CD4-positive, alpha-beta memory T cell (primary cell): ENCODE measurements at regions of chr19 and their contacts with region 1.

Region 1: GRCh38 chr19:57819475-57820148 is 4.9 kb upstream of the ZNF552 start:
- DNase-seq: peak; percentile 80 to 91 (median 84)
- H3K4me3 ChIP-seq: peak overlapping the region; percentile 86 to 91
- H3K4me3 Mint-ChIP-seq: peak overlapping the region; percentile 96 to 99 (median 98)
- H3K27ac ChIP-seq: peak overlapping the region; percentile 75
- H3K27ac Mint-ChIP-seq: peak overlapping the region; percentile 93 to 99 (median 99)
- H3K4me1 ChIP-seq: peaks cover 25% of the 10 kb centered on the region
- H3K4me1 Mint-ChIP-seq: peaks cover 45 to 75% (median 55%) of the 10 kb centered on the region in 4 donors
- H3K27me3 ChIP-seq: no peaks in the 10 kb centered on the region
- H3K27me3 Mint-ChIP-seq: no peaks in the 10 kb centered on the region

Region 2: GRCh38 chr19:57512845-57513244 is 306.8 kb before region 1 on chr19:
- CTCF ChIA-PET with region 1: no interaction called
- POLR2A ChIA-PET with region 1: no interaction called
- intact Hi-C with region 1: no loop called
- DNase-seq: no peak
- H3K4me3 ChIP-seq: no peak overlapping the region
- H3K4me3 Mint-ChIP-seq: no peak overlapping the region
- H3K27ac ChIP-seq: no peak overlapping the region
- H3K27ac Mint-ChIP-seq: no peak overlapping the region
- H3K4me1 ChIP-seq: no peaks in the 10 kb centered on the region
- H3K4me1 Mint-ChIP-seq: no peaks in the 10 kb centered on the region
- H3K27me3 ChIP-seq: no peaks in the 10 kb centered on the region
- H3K27me3 Mint-ChIP-seq: no peaks in the 10 kb centered on the region

Region 3: DNA sequence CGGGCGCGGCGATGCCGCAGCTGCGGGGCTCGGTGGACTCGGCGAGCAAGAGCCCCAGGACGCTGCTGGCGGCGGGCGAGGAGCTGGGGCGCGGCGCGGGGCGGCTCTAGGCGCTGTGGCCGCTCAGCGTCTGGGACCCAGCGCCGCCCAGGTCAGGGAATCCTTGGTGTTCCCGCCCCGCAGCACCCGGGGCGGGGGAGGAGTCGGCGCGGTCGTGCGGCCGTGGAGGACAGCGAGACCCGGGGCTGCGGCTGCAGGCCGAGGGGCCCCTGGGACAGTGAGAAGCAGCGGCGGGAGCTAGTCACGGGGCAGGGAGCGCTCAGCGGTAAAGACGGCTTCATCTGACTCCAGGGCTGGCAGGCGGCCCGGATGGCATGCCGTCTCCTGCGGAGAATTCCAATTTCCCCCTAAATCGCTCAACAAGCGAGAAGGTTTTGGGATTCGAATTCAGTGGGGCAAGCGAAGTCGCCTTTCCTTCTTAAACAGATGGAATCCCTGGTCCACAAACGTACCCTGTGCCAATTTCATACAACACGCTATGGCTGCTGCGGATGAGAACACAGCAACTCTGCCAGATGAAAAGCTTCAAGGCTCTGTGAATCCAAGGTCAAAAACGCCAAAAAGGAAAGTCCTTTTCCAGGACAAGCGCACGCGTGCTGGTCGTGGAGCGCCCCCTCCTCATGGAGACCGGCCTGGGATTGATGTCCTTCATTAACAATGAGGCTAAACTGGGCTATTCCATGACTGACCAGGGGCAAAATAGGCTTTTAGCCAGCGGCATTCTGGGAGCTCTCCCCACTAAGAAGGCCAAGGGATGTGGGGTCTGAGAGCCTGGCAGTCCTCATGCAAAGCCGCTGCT is 155.1 kb before region 1 on chr19:
- CTCF ChIA-PET with region 1: no interaction called
- POLR2A ChIA-PET with region 1: no interaction called
- intact Hi-C with region 1: no loop called
- DNase-seq: peak in 3 of 5 donors; percentile 6 to 10 (median 8)
- H3K4me3 ChIP-seq: no peak overlapping the region
- H3K4me3 Mint-ChIP-seq: peak overlapping the region; percentile 47 to 76 (median 69)
- H3K27ac ChIP-seq: no peak overlapping the region
- H3K27ac Mint-ChIP-seq: no peak overlapping the region
- H3K4me1 ChIP-seq: peaks cover 12% of the 10 kb centered on the region
- H3K4me1 Mint-ChIP-seq: peaks cover 0 to 5% (median under 1%) of the 10 kb centered on the region in 4 donors
- H3K27me3 ChIP-seq: peaks cover 3% of the 10 kb centered on the region
- H3K27me3 Mint-ChIP-seq: peaks cover 23 to 25% of the 10 kb centered on the region in 2 donors

Region 4: GRCh38 chr19:57719901-57720519 is 99.6 kb before region 1 on chr19:
- CTCF ChIA-PET with region 1: no interaction called
- POLR2A ChIA-PET with region 1: no interaction called
- intact Hi-C with region 1: loop called (anchors 5 kb)
- DNase-seq: no peak
- H3K4me3 ChIP-seq: no peak overlapping the region
- H3K4me3 Mint-ChIP-seq: no peak overlapping the region
- H3K27ac ChIP-seq: no peak overlapping the region
- H3K27ac Mint-ChIP-seq: no peak overlapping the region
- H3K4me1 ChIP-seq: no peaks in the 10 kb centered on the region
- H3K4me1 Mint-ChIP-seq: peaks cover 1 to 9% (median 5%) of the 10 kb centered on the region in 4 donors
- H3K27me3 ChIP-seq: no peaks in the 10 kb centered on the region
- H3K27me3 Mint-ChIP-seq: no peaks in the 10 kb centered on the region

Region 5: GRCh38 chr19:57769345-57770131 is 50.1 kb before region 1 on chr19 and contains the start of gene ZNF586:
- CTCF ChIA-PET with region 1: no interaction called
- POLR2A ChIA-PET with region 1: interaction called, 9 read pairs
- intact Hi-C with region 1: loop called (anchors 2 kb)
- DNase-seq: peak; percentile 82 to 91 (median 85)
- H3K4me3 ChIP-seq: peak within 1 kb of the TSS; percentile 62 to 75
- H3K4me3 Mint-ChIP-seq: peak within 1 kb of the TSS; percentile 96 to 99 (median 96)
- H3K27ac ChIP-seq: peak within 1 kb of the TSS; percentile 75
- H3K27ac Mint-ChIP-seq: peak within 1 kb of the TSS; percentile 91 to 98 (median 96)
- H3K4me1 ChIP-seq: peaks cover 20% of the 10 kb centered on the region
- H3K4me1 Mint-ChIP-seq: peaks cover 23 to 51% (median 33%) of the 10 kb centered on the region in 4 donors
- H3K27me3 ChIP-seq: no peaks in the 10 kb centered on the region
- H3K27me3 Mint-ChIP-seq: no peaks in the 10 kb centered on the region
- total RNA-seq, gene ZNF586: 46.4 to 51.7 TPM

Region 6: GRCh38 chr19:57850553-57851017 is 31.0 kb after region 1 on chr19:
- CTCF ChIA-PET with region 1: no interaction called
- POLR2A ChIA-PET with region 1: interaction called, 10 read pairs
- intact Hi-C with region 1: no loop called
- DNase-seq: no peak
- H3K4me3 ChIP-seq: peak overlapping the region; percentile 62 to 91
- H3K4me3 Mint-ChIP-seq: peak overlapping the region; percentile 90 to 96 (median 96)
- H3K27ac ChIP-seq: peak overlapping the region; percentile 84
- H3K27ac Mint-ChIP-seq: peak overlapping the region; percentile 94 to 98 (median 97)
- H3K4me1 ChIP-seq: peaks cover 20% of the 10 kb centered on the region
- H3K4me1 Mint-ChIP-seq: peaks cover 19 to 46% (median 30%) of the 10 kb centered on the region in 4 donors
- H3K27me3 ChIP-seq: no peaks in the 10 kb centered on the region
- H3K27me3 Mint-ChIP-seq: no peaks in the 10 kb centered on the region

Region 7: GRCh38 chr19:57964748-57965147 is 145.1 kb after region 1 on chr19:
- CTCF ChIA-PET with region 1: no interaction called
- POLR2A ChIA-PET with region 1: no interaction called
- intact Hi-C with region 1: no loop called
- DNase-seq: no peak
- H3K4me3 ChIP-seq: no peak overlapping the region
- H3K4me3 Mint-ChIP-seq: no peak overlapping the region
- H3K27ac ChIP-seq: no peak overlapping the region
- H3K27ac Mint-ChIP-seq: no peak overlapping the region
- H3K4me1 ChIP-seq: no peaks in the 10 kb centered on the region
- H3K4me1 Mint-ChIP-seq: no peaks in the 10 kb centered on the region
- H3K27me3 ChIP-seq: no peaks in the 10 kb centered on the region
- H3K27me3 Mint-ChIP-seq: no peaks in the 10 kb centered on the region

Region 8: GRCh38 chr19:58317476-58318072 is 498.0 kb after region 1 on chr19:
- CTCF ChIA-PET with region 1: no interaction called
- POLR2A ChIA-PET with region 1: no interaction called
- intact Hi-C with region 1: no loop called
- DNase-seq: peak in 1 of 5 donors; percentile 15
- H3K4me3 ChIP-seq: no peak overlapping the region
- H3K4me3 Mint-ChIP-seq: no peak overlapping the region
- H3K27ac ChIP-seq: no peak overlapping the region
- H3K27ac Mint-ChIP-seq: peak overlapping the region in 1 of 7 donors; percentile 43
- H3K4me1 ChIP-seq: no peaks in the 10 kb centered on the region
- H3K4me1 Mint-ChIP-seq: peaks cover 0 to 3% (median 0%) of the 10 kb centered on the region in 4 donors
- H3K27me3 ChIP-seq: no peaks in the 10 kb centered on the region
- H3K27me3 Mint-ChIP-seq: no peaks in the 10 kb centered on the region